ENCODE measurements at regions of chr3 and their contacts with region 1.

Region 1: DNA sequence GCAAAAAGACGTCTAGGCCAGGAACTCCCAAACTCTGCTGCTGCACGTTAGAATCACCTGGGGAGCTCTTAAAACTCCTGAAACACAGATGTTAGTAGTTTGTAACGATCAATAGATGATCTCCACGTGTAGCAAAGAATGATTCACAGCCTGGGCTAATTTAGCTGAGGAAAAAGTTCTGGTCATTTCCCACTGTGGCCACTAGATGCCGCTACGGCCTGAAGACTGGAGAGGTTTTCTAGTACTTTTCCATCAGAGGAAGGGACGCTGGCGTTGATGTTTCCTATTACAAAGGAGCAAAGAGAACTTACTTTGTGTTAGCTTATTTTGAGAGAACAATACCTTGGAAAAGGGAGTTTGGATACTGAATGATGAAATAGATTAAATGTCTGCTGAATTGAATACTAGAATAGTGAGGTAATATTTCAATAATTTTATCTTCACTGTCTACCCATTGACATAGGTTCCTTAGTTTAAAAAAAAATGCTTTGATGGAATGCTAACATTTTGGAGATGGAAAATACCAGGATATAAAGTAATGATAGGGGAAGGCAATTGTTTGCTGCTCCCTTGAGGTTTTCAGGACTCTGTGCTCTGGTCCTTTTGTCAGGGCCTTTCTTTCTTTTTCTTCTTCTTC is 159.1 kb downstream of the P3H2 start:
- DNase-seq: peak; percentile 82
- ATAC-seq: peak; percentile 92
- H3K4me3 ChIP-seq: no peak overlapping the region
- H3K27ac ChIP-seq: no peak overlapping the region
- H3K4me1 ChIP-seq: no peaks in the 10 kb centered on the region
- H3K27me3 ChIP-seq: no peaks in the 10 kb centered on the region
- CTCF ChIP-seq: peak; percentile 96
- POLR2A ChIP-seq: no peak
- RAD21 ChIP-seq: peak; percentile 93

Region 2: GRCh38 chr3:189084620-189085019 is 877.0 kb before region 1 on chr3:
- CTCF ChIA-PET with region 1: no interaction called
- POLR2A ChIA-PET with region 1: no interaction called
- dilution Hi-C with region 1: no loop called
- in situ Hi-C with region 1: no loop called
- intact Hi-C with region 1: no loop called
- DNase-seq: no peak
- ATAC-seq: no peak
- H3K4me3 ChIP-seq: no peak overlapping the region
- H3K27ac ChIP-seq: no peak overlapping the region
- H3K4me1 ChIP-seq: no peaks in the 10 kb centered on the region
- H3K27me3 ChIP-seq: peaks cover 4% of the 10 kb centered on the region; the same call in 1 of the 2 replicates
- CTCF ChIP-seq: no peak
- POLR2A ChIP-seq: no peak
- RAD21 ChIP-seq: no peak

Region 3: DNA sequence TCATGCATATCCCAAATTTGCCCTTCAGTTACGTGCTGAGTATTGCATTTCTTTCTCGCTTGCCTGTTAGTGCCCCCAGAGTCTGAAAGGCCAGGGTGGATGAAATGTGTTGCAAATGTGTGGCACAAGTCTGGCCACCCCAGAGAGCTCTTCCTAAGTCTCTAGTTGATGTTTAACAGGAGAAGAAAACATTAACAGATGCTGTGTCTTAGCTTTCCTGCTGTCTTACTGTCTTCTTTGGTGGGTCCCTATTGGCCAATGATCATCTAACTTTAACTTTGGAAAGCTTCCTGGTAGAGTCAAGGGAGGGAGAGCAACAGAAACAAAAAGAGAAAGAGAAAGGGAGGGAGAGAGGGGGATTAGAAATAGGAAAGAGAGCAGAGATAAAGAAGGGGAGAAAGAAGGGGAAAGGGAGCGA is 235.7 kb after region 1 on chr3:
- CTCF ChIA-PET with region 1: interaction called, 5 read pairs
- POLR2A ChIA-PET with region 1: no interaction called
- dilution Hi-C with region 1: no loop called
- in situ Hi-C with region 1: loop called (anchors 5 kb)
- intact Hi-C with region 1: loop called (anchors 1 kb)
- DNase-seq: no peak
- ATAC-seq: no peak
- H3K4me3 ChIP-seq: no peak overlapping the region
- H3K27ac ChIP-seq: no peak overlapping the region
- H3K4me1 ChIP-seq: peaks cover under 1% of the 10 kb centered on the region; the same call in 1 of the 2 replicates
- H3K27me3 ChIP-seq: no peaks in the 10 kb centered on the region
- CTCF ChIP-seq: no peak
- POLR2A ChIP-seq: no peak
- RAD21 ChIP-seq: no peak

Region 4: DNA sequence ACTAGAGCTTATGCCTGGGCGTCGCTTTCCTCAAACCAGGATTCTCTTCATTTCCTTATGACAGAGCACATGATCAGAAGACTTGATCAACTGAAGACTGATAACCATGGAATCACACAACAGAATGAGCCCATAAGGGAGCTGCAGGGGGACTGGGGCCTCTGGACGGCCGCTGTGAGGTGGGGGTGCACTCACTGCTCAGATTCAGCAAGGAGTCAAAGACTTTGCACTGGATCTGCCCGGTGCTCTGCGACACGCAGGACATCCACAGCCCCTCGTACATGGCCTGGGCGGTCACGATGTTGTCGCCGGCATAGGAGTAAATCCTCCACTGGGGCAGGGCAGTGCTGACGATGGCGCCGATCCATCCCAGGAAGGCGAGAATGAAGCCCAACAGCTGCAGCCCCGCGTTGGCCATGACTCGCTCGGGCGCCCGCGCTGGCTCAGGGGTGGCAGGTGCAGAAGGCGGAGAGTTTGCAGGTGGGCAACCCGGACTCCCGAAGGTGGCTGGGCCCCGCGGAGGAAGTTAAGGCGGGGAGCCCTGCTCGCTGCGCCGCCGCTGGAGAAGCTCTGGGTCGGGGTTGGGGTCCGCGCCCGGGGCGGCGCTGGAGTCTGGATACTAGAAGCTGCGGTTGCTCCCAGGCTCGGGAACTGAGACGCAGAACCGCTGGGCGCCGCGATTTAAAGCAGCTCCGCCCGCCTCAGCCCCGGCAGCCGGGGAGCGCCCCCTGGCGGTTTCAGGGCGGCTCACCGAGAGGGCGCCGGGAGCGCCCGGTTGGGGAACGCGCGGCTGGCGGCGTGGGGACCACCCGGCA is 360.4 kb after region 1 on chr3 and contains the start of gene CLDN1:
- CTCF ChIA-PET with region 1: interaction called, 13 read pairs
- POLR2A ChIA-PET with region 1: no interaction called
- dilution Hi-C with region 1: no loop called
- in situ Hi-C with region 1: loop called (anchors 5 kb)
- intact Hi-C with region 1: loop called (anchors 1 kb)
- DNase-seq: peak; percentile 69
- ATAC-seq: peak; percentile 93
- H3K4me3 ChIP-seq: peak within 1 kb of the TSS; percentile 66
- H3K27ac ChIP-seq: peak within 1 kb of the TSS; percentile 3; the same call in 1 of the 2 replicates
- H3K4me1 ChIP-seq: peaks cover 14% of the 10 kb centered on the region
- H3K27me3 ChIP-seq: no peaks in the 10 kb centered on the region
- CTCF ChIP-seq: peak; percentile 95
- POLR2A ChIP-seq: peak; percentile 63; the same call in 1 of the 2 replicates
- RAD21 ChIP-seq: peak; percentile 81
- total RNA-seq, gene CLDN1: 4.7 and 7.2 TPM in 2 replicates

Region 5: DNA sequence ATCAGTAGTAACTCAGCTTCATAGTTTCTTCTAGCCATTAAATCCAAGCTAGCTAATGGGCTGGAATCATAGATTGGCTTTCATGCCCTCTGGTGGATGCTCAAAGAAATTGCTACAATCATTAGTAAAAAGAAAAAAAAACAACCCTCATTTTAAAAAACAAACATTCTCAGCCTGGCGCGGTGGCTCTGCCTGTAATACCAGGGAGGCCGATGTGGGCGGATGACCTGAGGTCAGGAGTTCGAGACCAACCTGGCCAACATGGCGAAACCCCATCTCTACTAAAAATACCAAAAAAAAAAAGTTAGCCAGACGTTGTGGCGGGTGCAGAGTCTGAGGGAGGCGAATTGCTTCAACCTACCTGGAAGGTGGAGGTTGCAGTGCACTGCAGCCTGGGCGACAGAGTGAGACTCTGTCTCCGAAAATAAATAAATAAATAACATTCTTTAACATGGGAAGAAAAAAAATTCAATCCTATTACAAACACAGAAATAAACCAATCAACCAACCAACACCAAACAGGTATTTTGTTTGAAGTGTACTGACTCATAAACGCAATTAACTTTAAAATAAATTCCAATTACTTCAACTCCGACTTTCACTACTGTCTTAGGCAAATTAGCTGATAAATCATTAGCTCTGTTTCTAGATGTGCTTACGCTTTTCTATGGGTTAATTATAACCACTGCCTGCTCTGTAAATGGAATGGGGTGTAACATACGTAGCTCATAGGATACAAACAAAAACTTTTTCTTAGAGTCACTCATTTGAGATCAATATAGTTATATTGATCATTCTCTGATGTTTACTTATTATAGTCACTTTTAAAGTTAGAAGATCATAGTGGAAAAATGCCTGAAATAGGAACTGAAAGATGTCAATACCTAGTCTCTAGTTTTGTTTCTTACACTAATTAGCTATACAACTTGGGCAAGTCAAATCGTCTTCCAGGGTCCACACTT is 463.1 kb after region 1 on chr3:
- CTCF ChIA-PET with region 1: interaction called, 5 read pairs
- POLR2A ChIA-PET with region 1: no interaction called
- dilution Hi-C with region 1: no loop called
- in situ Hi-C with region 1: no loop called
- intact Hi-C with region 1: loop called (anchors 1 kb)
- DNase-seq: peak; percentile 76
- ATAC-seq: peak; percentile 75
- H3K4me3 ChIP-seq: no peak overlapping the region
- H3K27ac ChIP-seq: no peak overlapping the region
- H3K4me1 ChIP-seq: no peaks in the 10 kb centered on the region
- H3K27me3 ChIP-seq: no peaks in the 10 kb centered on the region
- CTCF ChIP-seq: peak; percentile 75
- POLR2A ChIP-seq: no peak
- RAD21 ChIP-seq: peak; percentile 81

Region 6: DNA sequence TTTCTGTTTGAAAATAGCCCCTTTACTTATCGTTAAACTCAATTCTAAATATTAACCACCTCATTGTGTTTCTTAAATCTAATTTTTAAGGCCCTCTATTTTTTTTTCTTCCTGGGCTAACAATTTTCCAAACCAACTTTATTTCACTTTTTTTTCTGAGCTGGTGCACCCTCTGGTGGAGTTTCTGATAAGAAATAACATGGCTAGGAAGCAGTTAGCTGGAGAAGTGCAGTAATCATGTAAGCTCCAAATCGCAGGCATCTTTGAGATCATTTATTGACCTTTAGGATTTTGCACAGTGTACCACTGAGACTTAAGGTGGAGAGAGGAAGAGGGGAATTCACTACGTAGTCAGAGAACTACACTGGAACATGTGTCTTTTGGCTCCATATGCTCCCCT is 481.6 kb after region 1 on chr3:
- CTCF ChIA-PET with region 1: interaction called, 13 read pairs
- POLR2A ChIA-PET with region 1: no interaction called
- dilution Hi-C with region 1: no loop called
- in situ Hi-C with region 1: loop called (anchors 10 kb)
- intact Hi-C with region 1: loop called (anchors 5 kb)
- DNase-seq: peak; percentile 44
- ATAC-seq: no peak
- H3K4me3 ChIP-seq: no peak overlapping the region
- H3K27ac ChIP-seq: no peak overlapping the region
- H3K4me1 ChIP-seq: no peaks in the 10 kb centered on the region
- H3K27me3 ChIP-seq: no peaks in the 10 kb centered on the region
- CTCF ChIP-seq: peak; percentile 52
- POLR2A ChIP-seq: no peak
- RAD21 ChIP-seq: peak; percentile 43